ENCODE measurements at regions of chr3 and their contacts with region 1.

Region 1: GRCh38 chr3:171654809-171655208 is 155.5 kb downstream of the PLD1 start:
- DNase-seq: peak; percentile 83
- ATAC-seq: peak; percentile 95

Region 2: GRCh38 chr3:172341482-172342059 is 686.8 kb after region 1 on chr3:
- intact Hi-C with region 1: loop called (anchors 5 kb)
- DNase-seq: no peak
- ATAC-seq: peak; percentile 79

Region 3: DNA sequence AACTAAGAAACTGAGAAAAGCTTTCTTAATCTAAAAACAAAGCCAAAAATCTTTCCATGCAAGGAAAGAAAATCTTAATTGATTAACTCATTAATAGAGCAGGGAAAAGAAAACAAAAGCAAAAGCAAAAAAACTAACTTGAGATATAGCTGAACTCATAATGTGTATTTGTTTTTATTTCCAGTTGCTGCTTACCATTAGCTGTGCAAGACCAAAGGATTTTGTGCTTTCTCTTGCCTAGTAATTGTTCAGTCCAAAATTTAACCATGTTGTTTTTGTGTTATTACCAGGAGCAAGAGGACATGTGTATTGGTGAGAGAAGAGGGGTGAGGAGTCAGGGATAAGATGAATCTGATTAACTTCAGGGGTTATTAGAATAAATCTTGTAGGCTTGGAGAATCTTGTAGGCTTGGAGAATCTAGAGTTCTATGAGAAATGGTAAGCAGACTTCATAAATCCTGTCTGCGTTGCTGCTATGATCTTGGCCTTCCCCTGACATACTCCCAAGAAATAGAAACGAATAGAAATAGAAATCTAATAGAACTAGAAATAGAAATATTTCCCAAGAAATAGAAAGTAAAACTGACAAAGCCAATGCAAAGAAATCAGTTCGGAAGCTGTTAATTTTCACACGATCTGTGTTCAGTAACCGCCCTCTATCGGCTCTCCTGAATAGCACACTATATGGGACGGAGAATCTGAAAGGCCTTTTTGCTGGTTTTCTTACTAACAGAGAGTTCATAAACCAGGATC is 941.0 kb after region 1 on chr3:
- intact Hi-C with region 1: no loop called
- DNase-seq: no peak
- ATAC-seq: peak; percentile 87